Activated B cell treated with CpG ODN at 0.5 μM for 24 hours (primary cell): ENCODE measurements at regions of chr3 and their contacts with region 1.

Region 1: DNA sequence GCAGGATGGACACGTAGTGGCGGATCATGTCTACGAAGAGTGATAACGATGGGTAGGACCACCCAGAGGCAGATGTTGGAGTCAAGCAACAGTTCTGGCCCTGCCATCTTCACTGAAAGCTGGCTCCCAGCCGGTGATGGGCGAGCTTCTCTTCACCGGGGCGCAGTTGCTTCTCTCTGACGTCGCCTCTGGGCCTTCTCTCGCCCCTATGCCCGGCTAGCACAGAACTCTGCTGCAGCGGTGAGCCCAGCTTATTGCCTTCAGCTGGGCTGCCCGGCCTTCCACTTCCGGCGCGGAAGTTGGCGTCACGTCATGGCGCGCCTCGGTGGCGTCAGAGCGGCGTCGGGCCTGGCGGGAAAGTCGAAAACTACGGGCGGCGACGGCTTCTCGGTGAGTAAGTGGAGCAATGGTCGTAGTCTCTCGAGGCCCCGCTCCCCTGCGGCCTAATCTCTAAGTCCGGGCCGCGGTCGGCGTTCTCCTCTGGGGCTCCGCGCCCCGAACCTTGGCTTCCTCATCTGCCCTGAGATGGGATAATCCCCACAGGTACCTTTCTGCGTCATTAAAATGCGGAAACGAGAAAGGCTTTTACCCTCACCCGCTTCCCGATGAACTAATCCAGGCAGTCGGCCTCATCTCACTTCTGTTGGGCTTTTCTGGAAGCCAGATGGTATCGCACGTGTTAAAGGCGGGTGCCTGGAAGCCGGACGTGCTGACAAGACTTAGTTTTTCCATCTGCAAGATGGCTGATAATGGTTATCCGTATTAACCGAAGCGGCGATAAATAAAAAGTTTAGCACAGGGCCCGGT is at the start of gene FANCD2:
- DNase-seq: peak; percentile 97
- ATAC-seq: peak; percentile 86
- H3K4me3 Mint-ChIP-seq: peak within 1 kb of the TSS; percentile 96
- H3K27ac Mint-ChIP-seq: peak within 1 kb of the TSS; percentile 96
- H3K4me1 Mint-ChIP-seq: peaks cover 37% of the 10 kb centered on the region
- H3K27me3 Mint-ChIP-seq: no peaks in the 10 kb centered on the region
- CTCF ChIP-seq: no peak
- total RNA-seq, gene FANCD2: 26.8 and 31.4 TPM in 2 replicates

Region 2: GRCh38 chr3:9503283-9503682 is 523.0 kb before region 1 on chr3:
- CTCF ChIA-PET with region 1: no interaction called
- POLR2A ChIA-PET with region 1: interaction called, 3 read pairs
- intact Hi-C with region 1: loop called (anchors 10 kb)
- DNase-seq: peak; percentile 63
- ATAC-seq: peak; percentile 83
- H3K4me3 Mint-ChIP-seq: no peak overlapping the region
- H3K27ac Mint-ChIP-seq: no peak overlapping the region
- H3K4me1 Mint-ChIP-seq: peaks cover 26% of the 10 kb centered on the region
- H3K27me3 Mint-ChIP-seq: peaks cover 35% of the 10 kb centered on the region
- CTCF ChIP-seq: peak; percentile 50

Region 3: GRCh38 chr3:9779721-9780457 is 246.4 kb before region 1 on chr3:
- CTCF ChIA-PET with region 1: no interaction called
- POLR2A ChIA-PET with region 1: interaction called, 3 read pairs
- intact Hi-C with region 1: loop called (anchors 1 kb)
- DNase-seq: peak; percentile 30
- ATAC-seq: peak; percentile 76
- H3K4me3 Mint-ChIP-seq: peak overlapping the region; percentile 32
- H3K27ac Mint-ChIP-seq: peak overlapping the region; percentile 88
- H3K4me1 Mint-ChIP-seq: peaks cover 58% of the 10 kb centered on the region
- H3K27me3 Mint-ChIP-seq: no peaks in the 10 kb centered on the region
- CTCF ChIP-seq: no peak

Region 4: GRCh38 chr3:9986237-9986725 is 40.0 kb before region 1 on chr3:
- CTCF ChIA-PET with region 1: interaction called, 3 read pairs
- POLR2A ChIA-PET with region 1: interaction called, 16 read pairs
- intact Hi-C with region 1: loop called (anchors 1 kb)
- DNase-seq: no peak
- ATAC-seq: peak; percentile 28
- H3K4me3 Mint-ChIP-seq: peak overlapping the region; percentile 98
- H3K27ac Mint-ChIP-seq: peak overlapping the region; percentile 100
- H3K4me1 Mint-ChIP-seq: peaks cover 24% of the 10 kb centered on the region
- H3K27me3 Mint-ChIP-seq: no peaks in the 10 kb centered on the region
- CTCF ChIP-seq: no peak

Region 5: GRCh38 chr3:10192953-10193691 is 166.8 kb after region 1 on chr3:
- CTCF ChIA-PET with region 1: no interaction called
- POLR2A ChIA-PET with region 1: no interaction called
- intact Hi-C with region 1: loop called (anchors 1 kb)
- DNase-seq: peak; percentile 53
- ATAC-seq: peak; percentile 58
- H3K4me3 Mint-ChIP-seq: peak overlapping the region; percentile 79
- H3K27ac Mint-ChIP-seq: peak overlapping the region; percentile 99
- H3K4me1 Mint-ChIP-seq: peaks cover 88% of the 10 kb centered on the region
- H3K27me3 Mint-ChIP-seq: no peaks in the 10 kb centered on the region
- CTCF ChIP-seq: no peak